ENCODE measurements at regions of chr5 and their contacts with region 1.

Region 1: GRCh38 chr5:73764586-73764985 is 138.6 kb downstream of the ARHGEF28 start:
- DNase-seq: peak; percentile 71 to 95
- ATAC-seq: peak; percentile 98 to 99
- H3K4me3 ChIP-seq: no peak overlapping the region
- H3K27ac ChIP-seq: peak overlapping the region; percentile 78 to 89
- H3K4me1 ChIP-seq: peaks cover 48% of the 10 kb centered on the region
- CTCF ChIP-seq: no peak
- EP300 ChIP-seq: peak; percentile 76 to 79; a peak in 2 of 5 replicates
- POLR2A ChIP-seq: no peak
- RAD21 ChIP-seq: peak; percentile 34 to 41; a peak in 3 of 5 replicates

Region 2: GRCh38 chr5:73605227-73606020 is 159.2 kb before region 1 on chr5:
- CTCF ChIA-PET with region 1: no interaction called
- POLR2A ChIA-PET with region 1: no interaction called
- DNase-seq: peak; percentile 31 to 84
- ATAC-seq: peak; percentile 89 to 96
- H3K4me3 ChIP-seq: no peak overlapping the region; the same call in 2 of the 3 replicates
- H3K27ac ChIP-seq: peak overlapping the region; percentile 80 to 82
- H3K4me1 ChIP-seq: peaks cover 39% of the 10 kb centered on the region
- CTCF ChIP-seq: no peak
- EP300 ChIP-seq: 0 out of 5 replicates have a peak, but pooled peaks of 1 of the 2 experiments have one; percentile 12
- POLR2A ChIP-seq: no peak
- RAD21 ChIP-seq: no peak

Region 3: GRCh38 chr5:73638344-73639095 is 126.1 kb before region 1 on chr5:
- CTCF ChIA-PET with region 1: no interaction called
- POLR2A ChIA-PET with region 1: no interaction called
- DNase-seq: peak in 1 of 2 experiments; percentile 33
- ATAC-seq: peak; percentile 56 to 59; a peak in 4 of 6 replicates
- H3K4me3 ChIP-seq: peak overlapping the region; percentile 15; the same call in 1 of the 3 replicates
- H3K27ac ChIP-seq: peak overlapping the region; percentile 65 to 66
- H3K4me1 ChIP-seq: peaks cover 62% of the 10 kb centered on the region
- CTCF ChIP-seq: no peak
- EP300 ChIP-seq: peak in 1 of 2 experiments; percentile 24; a peak in 1 of 5 replicates
- POLR2A ChIP-seq: no peak
- RAD21 ChIP-seq: no peak

Region 4: GRCh38 chr5:73687357-73687756 is 77.2 kb before region 1 on chr5:
- CTCF ChIA-PET with region 1: no interaction called
- POLR2A ChIA-PET with region 1: no interaction called
- DNase-seq: no peak
- ATAC-seq: no peak
- H3K4me3 ChIP-seq: no peak overlapping the region
- H3K27ac ChIP-seq: no peak overlapping the region
- H3K4me1 ChIP-seq: peaks cover 29% of the 10 kb centered on the region
- CTCF ChIP-seq: no peak
- EP300 ChIP-seq: no peak
- POLR2A ChIP-seq: no peak
- RAD21 ChIP-seq: no peak

Region 5: GRCh38 chr5:73740274-73740790 is 24.3 kb before region 1 on chr5:
- CTCF ChIA-PET with region 1: no interaction called
- POLR2A ChIA-PET with region 1: no interaction called
- DNase-seq: no peak
- ATAC-seq: peak; percentile 64 to 72; a peak in 4 of 6 replicates
- H3K4me3 ChIP-seq: no peak overlapping the region
- H3K27ac ChIP-seq: no peak overlapping the region; a peak in 1 of 6 replicates
- H3K4me1 ChIP-seq: peaks cover 16% of the 10 kb centered on the region; the same call in 2 of the 3 replicates
- CTCF ChIP-seq: no peak
- EP300 ChIP-seq: no peak
- POLR2A ChIP-seq: no peak
- RAD21 ChIP-seq: no peak

Region 6: DNA sequence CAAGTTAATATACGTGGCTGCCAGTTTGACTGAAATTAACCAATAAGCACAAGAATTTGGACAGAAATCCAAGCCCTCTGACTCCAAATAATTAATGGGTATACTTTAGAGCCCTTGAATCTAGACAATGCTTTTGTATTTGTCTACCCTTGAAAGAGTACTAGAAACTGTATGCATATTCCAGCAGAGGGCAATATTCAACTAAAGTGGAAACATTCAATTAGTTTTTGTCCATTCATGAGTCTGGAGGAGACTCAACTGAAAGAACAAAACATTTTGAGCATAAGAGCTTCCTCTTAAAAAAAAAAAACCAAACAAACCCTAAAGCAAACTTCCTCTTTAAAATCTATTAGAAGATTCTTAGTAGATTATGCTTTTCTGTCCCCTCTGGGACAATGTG is 19.2 kb after region 1 on chr5:
- CTCF ChIA-PET with region 1: interaction called, 12 read pairs
- POLR2A ChIA-PET with region 1: no interaction called
- DNase-seq: peak in 1 of 2 experiments; percentile 37
- ATAC-seq: peak; percentile 80 to 82
- H3K4me3 ChIP-seq: no peak overlapping the region
- H3K27ac ChIP-seq: peak overlapping the region in 1 of 2 experiments; percentile 30; a peak in 2 of 6 replicates
- H3K4me1 ChIP-seq: 0 out of 3 replicates have a peak, but pooled peaks cover 4% of the 10 kb centered on the region
- CTCF ChIP-seq: peak; percentile 57
- EP300 ChIP-seq: no peak
- POLR2A ChIP-seq: no peak
- RAD21 ChIP-seq: peak; percentile 43 to 49; a peak in 4 of 5 replicates

Measured in A549 (cell line).